ENCODE measurements at regions of chr10 and their contacts with region 1.

Region 1: DNA sequence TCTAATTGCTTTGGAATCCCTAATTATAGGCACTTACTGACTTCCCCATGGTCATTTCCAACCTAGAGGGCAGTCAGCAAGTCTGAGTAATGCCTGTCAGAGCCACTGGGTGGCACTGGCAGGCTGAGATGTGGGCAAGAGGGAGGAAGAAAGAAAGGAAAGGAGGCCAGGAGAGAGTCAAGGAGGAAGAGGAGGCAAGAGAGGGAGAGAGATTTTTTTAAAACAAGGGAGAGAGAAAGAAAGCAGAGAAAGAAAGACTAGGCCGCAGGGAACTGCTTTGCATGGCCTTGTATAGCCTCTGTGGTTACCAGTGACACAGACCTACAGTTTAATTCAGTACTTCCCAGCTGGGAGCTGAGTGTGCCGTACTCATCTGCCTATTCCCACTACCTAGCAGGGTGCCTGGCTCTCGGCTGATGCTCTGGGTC is 210.4 kb upstream of the ADO start:
- DNase-seq: peak; percentile 41 to 73 (median 61)
- H3K4me3 ChIP-seq: no peak overlapping the region
- H3K27ac ChIP-seq: no peak overlapping the region
- H3K4me1 ChIP-seq: no peaks in the 10 kb centered on the region
- H3K27me3 ChIP-seq: no peaks in the 10 kb centered on the region
- CTCF ChIP-seq: peak; percentile 78 to 98 (median 92)
- POLR2A ChIP-seq: no peak

Region 2: GRCh38 chr10:62480196-62480595 is 113.9 kb before region 1 on chr10:
- intact Hi-C with region 1: no loop called
- DNase-seq: no peak
- H3K4me3 ChIP-seq: no peak overlapping the region
- H3K27ac ChIP-seq: no peak overlapping the region
- H3K4me1 ChIP-seq: no peaks in the 10 kb centered on the region
- H3K27me3 ChIP-seq: no peaks in the 10 kb centered on the region
- CTCF ChIP-seq: no peak
- POLR2A ChIP-seq: no peak

Region 3: DNA sequence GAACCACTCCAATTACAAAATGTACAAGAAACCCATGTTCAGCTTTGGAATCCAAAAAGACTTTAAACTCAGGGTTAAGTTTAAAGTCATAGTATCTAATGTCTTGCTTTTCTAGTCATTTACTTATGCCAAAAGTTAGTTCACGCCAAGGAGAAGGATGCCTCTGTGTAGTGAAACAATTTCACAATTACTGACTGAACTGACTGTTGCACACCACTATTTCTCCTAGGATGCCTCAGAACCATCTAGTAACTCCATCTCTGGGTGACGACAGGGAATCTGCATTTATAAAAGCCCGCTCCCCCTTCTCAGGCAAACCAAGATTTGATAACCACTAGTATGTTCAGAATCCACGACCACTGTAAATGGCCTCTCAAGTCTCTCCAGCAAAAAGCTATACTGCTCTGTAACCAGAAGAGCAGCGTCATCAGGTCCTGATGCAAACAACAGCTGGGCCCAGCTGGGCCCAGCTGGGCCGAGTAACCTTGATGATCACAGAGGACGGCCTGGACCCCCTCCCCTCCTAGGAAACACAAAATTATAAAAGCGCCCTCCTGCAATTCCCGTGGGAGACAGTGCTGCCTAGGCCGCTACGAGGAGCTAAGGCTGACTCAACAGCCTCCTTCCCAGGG is 209.7 kb after region 1 on chr10:
- intact Hi-C with region 1: no loop called
- DNase-seq: no peak
- H3K4me3 ChIP-seq: peak overlapping the region; percentile 35 to 90 (median 67)
- H3K27ac ChIP-seq: peak overlapping the region; percentile 79 to 99 (median 87)
- H3K4me1 ChIP-seq: peaks cover 11 to 42% of the 10 kb centered on the region in 2 donors
- H3K27me3 ChIP-seq: no peaks in the 10 kb centered on the region
- CTCF ChIP-seq: no peak
- POLR2A ChIP-seq: no peak

Region 4: DNA sequence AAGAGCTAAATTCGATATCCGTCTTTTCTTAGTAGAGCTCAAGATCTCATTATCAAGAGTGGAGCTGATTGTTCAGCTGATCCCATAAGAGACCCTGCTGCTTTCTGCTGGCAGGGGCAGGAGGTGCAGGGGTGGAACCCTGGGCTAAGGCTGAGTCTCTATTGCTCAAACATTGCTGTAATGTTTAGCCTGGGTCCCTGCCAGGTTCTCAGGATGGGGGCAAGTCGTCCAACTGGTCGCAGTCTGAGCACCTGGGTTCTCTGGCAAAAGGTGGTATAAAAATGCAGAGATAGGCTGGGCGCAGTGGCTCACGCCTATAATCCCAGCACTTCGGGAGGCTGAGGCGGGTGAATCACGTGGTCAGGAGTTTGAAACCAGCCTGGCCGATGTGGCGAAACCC is 477.0 kb after region 1 on chr10:
- intact Hi-C with region 1: loop called in 1 of 2 experiments (anchors 10 kb)
- DNase-seq: no peak
- H3K4me3 ChIP-seq: no peak overlapping the region
- H3K27ac ChIP-seq: no peak overlapping the region
- H3K4me1 ChIP-seq: no peaks in the 10 kb centered on the region
- H3K27me3 ChIP-seq: peaks cover 5% of the 10 kb centered on the region
- CTCF ChIP-seq: no peak
- POLR2A ChIP-seq: no peak

Region 5: DNA sequence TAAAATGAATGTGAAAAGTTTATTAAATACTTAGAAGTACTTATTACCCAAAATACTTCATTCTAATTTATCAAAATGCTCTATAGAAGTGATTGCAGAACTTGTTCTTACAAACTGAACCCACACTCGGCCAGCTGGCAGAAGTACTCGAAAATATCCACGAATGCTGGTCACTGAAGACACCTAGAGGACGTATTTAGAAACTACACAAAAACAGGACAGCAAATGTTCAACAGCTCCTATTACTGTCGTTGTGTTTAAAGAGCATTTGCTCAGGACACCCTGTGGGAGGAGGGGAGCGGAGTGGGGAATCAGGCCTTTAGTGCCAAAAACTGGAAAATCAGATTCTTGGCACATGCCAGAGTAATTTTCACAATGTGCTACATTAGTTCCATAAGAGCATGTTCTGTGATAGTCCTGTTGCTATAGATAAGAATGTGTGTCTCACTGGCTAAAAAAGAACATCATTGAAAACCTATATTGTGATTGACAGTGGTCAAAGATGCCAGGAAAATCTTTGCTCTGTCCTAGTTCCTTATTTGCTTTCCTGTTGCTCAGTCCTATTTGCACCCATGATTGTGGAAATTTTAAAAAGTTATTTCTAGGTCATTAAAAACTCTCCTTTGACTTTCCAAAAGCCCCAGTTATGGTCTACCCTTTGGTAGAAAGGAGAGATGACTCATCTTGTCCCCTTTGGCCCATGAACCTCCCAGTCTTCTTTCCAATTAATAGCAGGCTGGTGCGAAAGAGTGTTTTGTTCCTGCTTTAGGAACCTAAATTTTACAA is 490.0 kb after region 1 on chr10:
- intact Hi-C with region 1: loop called (anchors 5 to 10 kb)
- DNase-seq: peak; percentile 32 to 81 (median 64)
- H3K4me3 ChIP-seq: no peak overlapping the region
- H3K27ac ChIP-seq: no peak overlapping the region
- H3K4me1 ChIP-seq: no peaks in the 10 kb centered on the region
- H3K27me3 ChIP-seq: no peaks in the 10 kb centered on the region
- CTCF ChIP-seq: peak; percentile 52 to 83 (median 76)
- POLR2A ChIP-seq: no peak

Measured in adrenal gland (tissue), 19 donors.